PC-3 (cell line): ENCODE measurements at regions of chr15 and their contacts with region 1.

Region 1: DNA sequence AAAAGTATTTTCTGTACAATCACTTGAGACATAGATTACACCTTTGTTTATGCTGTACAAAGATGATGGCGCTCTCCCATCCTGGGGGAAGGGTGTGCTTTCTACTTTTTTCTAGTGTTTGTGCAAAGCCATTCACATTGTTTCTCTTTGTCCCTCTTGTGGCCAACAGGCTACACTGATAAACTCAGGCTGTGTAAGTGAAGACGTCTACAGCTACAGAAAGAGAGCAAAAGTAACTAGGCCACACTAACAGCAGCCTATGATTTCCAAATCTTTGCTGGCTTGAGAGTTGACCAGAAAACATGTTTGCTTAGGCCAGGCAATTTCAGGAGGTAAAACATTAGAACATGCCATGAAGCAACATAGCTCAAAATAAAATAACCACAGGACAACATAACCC is 75.1 kb downstream of the FOXB1 start:
- DNase-seq: peak; percentile 26
- ATAC-seq: no peak; the same call in 1 of the 2 replicates
- H3K4me3 ChIP-seq: no peak overlapping the region
- H3K27ac ChIP-seq: no peak overlapping the region
- H3K4me1 ChIP-seq: peaks cover 21% of the 10 kb centered on the region
- H3K27me3 ChIP-seq: no peaks in the 10 kb centered on the region
- CTCF ChIP-seq: peak; percentile 57

Region 2: GRCh38 chr15:60017538-60018520 is 61.4 kb before region 1 on chr15:
- CTCF ChIA-PET with region 1: no interaction called
- POLR2A ChIA-PET with region 1: no interaction called
- intact Hi-C with region 1: loop called (anchors 10 kb)
- DNase-seq: peak; percentile 45
- ATAC-seq: no peak
- H3K4me3 ChIP-seq: no peak overlapping the region
- H3K27ac ChIP-seq: no peak overlapping the region
- H3K4me1 ChIP-seq: peaks cover 6% of the 10 kb centered on the region
- H3K27me3 ChIP-seq: peaks cover 22% of the 10 kb centered on the region
- CTCF ChIP-seq: no peak